GM12878 (cell line): ENCODE measurements at regions of chr1 and their contacts with region 1.

Region 1: DNA sequence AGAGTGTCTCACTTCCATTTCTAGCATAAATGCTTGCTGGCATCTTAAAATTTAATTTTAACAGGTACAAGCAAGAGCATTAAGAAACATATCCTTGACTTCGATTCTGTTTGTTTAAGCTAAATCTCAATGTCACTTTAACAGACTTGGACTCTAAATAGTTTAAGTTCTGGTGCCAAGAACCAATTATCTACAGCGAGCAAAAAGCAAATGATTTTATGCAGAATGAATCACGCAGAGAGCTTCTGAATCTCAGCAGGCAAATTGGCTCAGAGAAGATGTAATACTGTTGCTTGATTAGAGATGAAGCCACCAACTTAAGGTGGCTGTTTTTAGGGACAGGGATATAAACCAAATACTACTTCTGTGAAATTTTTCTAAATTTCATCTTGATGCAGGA is 117.0 kb upstream of the PLD5 start:
- DNase-seq: no peak
- ATAC-seq: no peak
- H3K4me3 ChIP-seq: no peak overlapping the region
- H3K27ac ChIP-seq: no peak overlapping the region
- H3K4me1 ChIP-seq: no peaks in the 10 kb centered on the region
- H3K27me3 ChIP-seq: no peaks in the 10 kb centered on the region
- CTCF ChIP-seq: no peak
- EP300 ChIP-seq: no peak
- POLR2A ChIP-seq: no peak
- RAD21 ChIP-seq: no peak

Region 2: GRCh38 chr1:242585616-242586359 is 55.7 kb before region 1 on chr1:
- CTCF ChIA-PET with region 1: no interaction called
- POLR2A ChIA-PET with region 1: no interaction called
- RAD21 ChIA-PET with region 1: no interaction called
- SMC1A ChIA-PET with region 1: no interaction called
- in situ Hi-C with region 1: no loop called
- intact Hi-C with region 1: no loop called
- DNase-seq: no peak
- ATAC-seq: no peak
- H3K4me3 ChIP-seq: no peak overlapping the region
- H3K27ac ChIP-seq: no peak overlapping the region
- H3K4me1 ChIP-seq: no peaks in the 10 kb centered on the region
- H3K27me3 ChIP-seq: no peaks in the 10 kb centered on the region
- CTCF ChIP-seq: no peak
- EP300 ChIP-seq: no peak
- POLR2A ChIP-seq: no peak
- RAD21 ChIP-seq: no peak

Region 3: DNA sequence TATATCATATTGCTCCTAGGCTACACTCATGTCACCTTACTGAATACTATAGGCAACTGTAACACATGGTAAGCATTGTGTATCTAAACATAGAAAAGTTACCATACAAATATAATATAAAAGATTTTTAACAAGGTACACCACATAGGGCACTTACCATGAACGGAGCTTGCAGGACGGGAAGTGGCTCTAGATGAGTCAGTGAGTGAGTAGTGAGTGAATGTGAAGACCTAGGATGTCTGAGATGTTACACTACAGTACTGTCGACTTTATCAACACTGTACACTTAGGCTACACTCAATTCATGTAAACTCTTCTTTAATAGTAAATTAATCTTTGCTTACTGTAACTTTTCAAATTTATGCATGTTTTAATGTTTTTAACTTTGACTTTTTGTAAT is 35.9 kb before region 1 on chr1:
- CTCF ChIA-PET with region 1: no interaction called
- POLR2A ChIA-PET with region 1: no interaction called
- RAD21 ChIA-PET with region 1: no interaction called
- SMC1A ChIA-PET with region 1: no interaction called
- in situ Hi-C with region 1: no loop called
- intact Hi-C with region 1: no loop called
- DNase-seq: no peak
- ATAC-seq: no peak
- H3K4me3 ChIP-seq: no peak overlapping the region
- H3K27ac ChIP-seq: no peak overlapping the region
- H3K4me1 ChIP-seq: no peaks in the 10 kb centered on the region
- H3K27me3 ChIP-seq: no peaks in the 10 kb centered on the region
- CTCF ChIP-seq: no peak
- EP300 ChIP-seq: no peak
- POLR2A ChIP-seq: no peak
- RAD21 ChIP-seq: no peak

Region 4: GRCh38 chr1:242651817-242652216 is 10.4 kb after region 1 on chr1:
- CTCF ChIA-PET with region 1: interaction called, 12 read pairs
- POLR2A ChIA-PET with region 1: no interaction called
- RAD21 ChIA-PET with region 1: no interaction called
- SMC1A ChIA-PET with region 1: interaction called, 3 read pairs
- in situ Hi-C with region 1: no loop called
- intact Hi-C with region 1: no loop called
- DNase-seq: no peak
- ATAC-seq: peak; percentile 42; the same call in 2 of the 3 replicates
- H3K4me3 ChIP-seq: no peak overlapping the region
- H3K27ac ChIP-seq: no peak overlapping the region
- H3K4me1 ChIP-seq: no peaks in the 10 kb centered on the region
- H3K27me3 ChIP-seq: no peaks in the 10 kb centered on the region; a peak in 1 of 4 replicates
- CTCF ChIP-seq: peak; percentile 37 to 41 (median 39); a peak in 3 of 6 replicates
- EP300 ChIP-seq: no peak
- POLR2A ChIP-seq: no peak
- RAD21 ChIP-seq: 0 out of 2 replicates have a peak, but pooled peaks have one; percentile 21

Region 5: DNA sequence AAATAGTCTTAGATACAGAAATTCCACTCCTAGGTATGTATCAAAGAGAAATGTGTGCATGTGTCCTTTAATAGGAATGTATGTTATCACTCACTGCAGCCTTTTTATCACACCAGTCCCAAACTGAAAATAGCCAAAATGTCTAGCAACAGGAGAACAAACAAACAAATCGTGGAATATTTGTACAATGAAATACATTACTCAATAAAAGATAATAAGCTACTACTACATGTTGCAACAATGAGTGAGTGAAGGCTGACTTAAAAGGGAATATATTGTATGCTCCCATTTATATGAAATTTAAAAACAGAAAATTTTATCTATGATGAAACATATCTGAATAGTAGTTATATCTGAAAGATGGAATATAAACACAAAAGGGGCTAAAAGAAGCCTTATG is 95.2 kb after region 1 on chr1:
- CTCF ChIA-PET with region 1: no interaction called
- POLR2A ChIA-PET with region 1: no interaction called
- RAD21 ChIA-PET with region 1: no interaction called
- SMC1A ChIA-PET with region 1: no interaction called
- in situ Hi-C with region 1: no loop called
- intact Hi-C with region 1: no loop called
- DNase-seq: no peak
- ATAC-seq: no peak
- H3K4me3 ChIP-seq: no peak overlapping the region
- H3K27ac ChIP-seq: no peak overlapping the region
- H3K4me1 ChIP-seq: no peaks in the 10 kb centered on the region
- H3K27me3 ChIP-seq: no peaks in the 10 kb centered on the region
- CTCF ChIP-seq: no peak
- EP300 ChIP-seq: no peak
- POLR2A ChIP-seq: no peak
- RAD21 ChIP-seq: no peak